ENCODE measurements at regions of chr12 and their contacts with region 1.

Region 1: GRCh38 chr12:13100882-13101769 is 2.3 kb downstream of the GSG1 start:
- DNase-seq: peak; percentile 90
- H3K4me3 Mint-ChIP-seq: peak overlapping the region; percentile 38
- H3K27ac Mint-ChIP-seq: peak overlapping the region; percentile 99
- H3K4me1 Mint-ChIP-seq: peaks cover 62% of the 10 kb centered on the region
- H3K27me3 Mint-ChIP-seq: no peaks in the 10 kb centered on the region
- CTCF ChIP-seq: no peak

Region 2: GRCh38 chr12:12899530-12900380 is 201.4 kb before region 1 on chr12:
- CTCF ChIA-PET with region 1: no interaction called
- POLR2A ChIA-PET with region 1: interaction called, 7 read pairs
- intact Hi-C with region 1: loop called (anchors 5 kb)
- DNase-seq: peak; percentile 93
- H3K4me3 Mint-ChIP-seq: peak overlapping the region; percentile 68
- H3K27ac Mint-ChIP-seq: peak overlapping the region; percentile 86
- H3K4me1 Mint-ChIP-seq: peaks cover 50% of the 10 kb centered on the region
- H3K27me3 Mint-ChIP-seq: no peaks in the 10 kb centered on the region
- CTCF ChIP-seq: no peak

Region 3: DNA sequence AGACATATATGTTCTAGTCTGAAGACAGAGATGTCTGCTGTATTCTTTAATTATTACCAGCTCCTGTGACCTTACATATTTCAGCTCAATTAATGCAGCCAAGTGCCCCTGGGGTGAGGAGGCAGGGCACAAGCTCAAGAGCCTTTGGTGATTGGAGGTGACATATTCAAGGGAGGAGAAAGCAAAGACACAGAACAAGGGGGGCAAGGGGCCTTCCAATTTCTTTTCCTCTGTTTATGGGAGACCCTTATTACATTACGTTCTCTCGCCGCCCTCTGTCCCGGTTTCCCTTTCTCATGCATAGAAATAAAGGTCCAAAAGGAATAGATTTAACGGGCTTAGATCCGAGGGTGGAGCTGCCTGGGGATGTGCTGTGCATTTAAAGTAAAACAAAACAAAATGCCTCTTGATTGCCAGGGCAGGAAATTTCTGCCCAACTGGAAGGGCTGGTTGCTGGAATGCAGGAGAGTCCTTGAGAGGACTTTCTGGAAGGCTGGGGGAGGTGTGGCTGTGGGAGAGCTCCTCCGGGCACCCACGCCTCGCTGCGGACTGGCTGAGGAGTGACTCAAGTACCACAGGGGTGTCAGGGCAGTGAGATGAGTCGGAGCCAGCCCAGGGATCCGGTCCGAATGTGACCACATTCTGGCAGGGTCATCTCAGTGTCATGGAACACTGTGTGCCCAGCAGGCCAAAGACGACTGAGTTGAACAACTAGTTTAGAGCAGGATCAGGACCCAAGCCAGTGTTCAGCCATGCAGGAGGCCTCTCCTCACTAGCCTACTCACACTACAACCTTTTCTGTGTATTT is 34.4 kb after region 1 on chr12:
- CTCF ChIA-PET with region 1: interaction called, 64 read pairs
- POLR2A ChIA-PET with region 1: interaction called, 117 read pairs
- intact Hi-C with region 1: loop called (anchors 1 kb)
- DNase-seq: peak; percentile 94
- H3K4me3 Mint-ChIP-seq: peak overlapping the region; percentile 67
- H3K27ac Mint-ChIP-seq: peak overlapping the region; percentile 76
- H3K4me1 Mint-ChIP-seq: peaks cover 41% of the 10 kb centered on the region
- H3K27me3 Mint-ChIP-seq: no peaks in the 10 kb centered on the region
- CTCF ChIP-seq: peak; percentile 19

Region 4: DNA sequence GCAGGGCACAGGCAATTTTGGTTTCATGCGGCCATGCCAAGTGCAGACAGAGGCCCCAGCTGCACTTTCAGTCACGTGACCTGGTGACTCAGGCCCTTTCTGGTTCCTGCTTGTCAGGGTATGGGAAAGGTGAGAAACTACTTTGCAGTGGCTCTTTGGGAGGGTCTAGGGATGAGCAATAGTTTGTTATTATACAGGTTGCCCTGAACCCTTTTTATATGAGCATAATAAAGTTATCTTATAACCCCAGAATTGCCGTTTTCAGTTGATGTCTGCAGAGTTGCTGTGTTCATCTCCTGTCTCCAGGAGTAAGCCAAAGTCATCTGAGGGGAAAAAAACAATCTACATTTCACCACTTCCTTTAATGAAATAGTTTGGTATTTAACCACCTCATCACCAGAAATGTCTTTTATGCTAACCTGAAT is 64.5 kb after region 1 on chr12:
- CTCF ChIA-PET with region 1: interaction called, 5 read pairs
- POLR2A ChIA-PET with region 1: interaction called, 205 read pairs
- intact Hi-C with region 1: no loop called
- DNase-seq: peak; percentile 98
- H3K4me3 Mint-ChIP-seq: no peak overlapping the region
- H3K27ac Mint-ChIP-seq: peak overlapping the region; percentile 60
- H3K4me1 Mint-ChIP-seq: peaks cover 25% of the 10 kb centered on the region
- H3K27me3 Mint-ChIP-seq: no peaks in the 10 kb centered on the region
- CTCF ChIP-seq: no peak

Region 5: GRCh38 chr12:13179211-13180074 is 78.3 kb after region 1 on chr12:
- CTCF ChIA-PET with region 1: interaction called, 9 read pairs
- POLR2A ChIA-PET with region 1: interaction called, 205 read pairs
- intact Hi-C with region 1: no loop called
- DNase-seq: peak; percentile 64
- H3K4me3 Mint-ChIP-seq: peak overlapping the region; percentile 49
- H3K27ac Mint-ChIP-seq: peak overlapping the region; percentile 69
- H3K4me1 Mint-ChIP-seq: peaks cover 24% of the 10 kb centered on the region
- H3K27me3 Mint-ChIP-seq: no peaks in the 10 kb centered on the region
- CTCF ChIP-seq: no peak

Region 6: DNA sequence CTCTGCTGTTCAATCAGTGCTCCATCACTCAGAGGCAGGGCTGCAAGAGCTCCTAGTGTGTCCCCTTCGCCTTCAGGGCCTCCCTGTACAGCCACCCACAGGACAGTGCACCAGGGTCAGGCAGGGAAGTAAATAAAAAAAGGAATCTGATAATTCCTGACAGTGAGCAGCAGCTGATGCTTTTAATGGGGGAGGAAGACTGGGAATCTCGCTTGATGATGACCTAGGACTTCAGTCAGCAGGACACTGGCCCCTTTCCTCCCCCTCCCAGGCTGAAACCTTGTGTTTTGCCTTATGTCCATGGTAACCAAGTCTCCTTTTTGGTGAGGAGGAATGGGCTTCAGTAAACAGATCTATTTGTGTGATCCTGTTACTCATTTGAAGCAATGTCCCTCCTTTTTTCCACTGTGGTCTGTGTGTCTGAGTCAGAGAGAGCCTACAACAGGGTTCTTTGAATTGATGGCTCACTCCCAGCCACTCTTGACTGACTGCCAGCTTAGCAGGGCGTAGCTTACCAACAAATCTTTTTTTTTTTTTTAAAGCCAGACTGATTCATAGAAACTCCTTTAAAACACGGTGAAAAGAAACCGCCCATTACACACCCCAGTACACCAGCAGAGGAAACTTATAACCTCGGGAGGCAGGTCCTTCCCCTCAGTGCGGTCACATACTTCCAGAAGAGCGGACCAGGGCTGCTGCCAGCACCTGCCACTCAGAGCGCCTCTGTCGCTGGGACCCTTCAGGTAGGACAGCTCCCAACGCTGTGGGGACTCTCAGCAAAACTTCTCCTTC is 95.2 kb after region 1 on chr12 and contains the start of gene EMP1:
- CTCF ChIA-PET with region 1: interaction called, 7 read pairs
- POLR2A ChIA-PET with region 1: interaction called, 255 read pairs
- intact Hi-C with region 1: loop called (anchors 1 kb)
- DNase-seq: peak; percentile 99
- H3K4me3 Mint-ChIP-seq: peak within 1 kb of the TSS; percentile 79
- H3K27ac Mint-ChIP-seq: peak within 1 kb of the TSS; percentile 82
- H3K4me1 Mint-ChIP-seq: peaks cover 51% of the 10 kb centered on the region
- H3K27me3 Mint-ChIP-seq: no peaks in the 10 kb centered on the region
- CTCF ChIP-seq: no peak
- total RNA-seq, gene EMP1: 193 and 230 TPM in 2 replicates